PC-9 (cell line): ENCODE measurements at regions of chr21 and their contacts with region 1.

Region 1: GRCh38 chr21:34888569-34889319 is 160.4 kb downstream of the RUNX1 start:
- DNase-seq: peak; percentile 78 to 91
- H3K4me3 ChIP-seq: peak overlapping the region; percentile 97
- H3K27ac ChIP-seq: peak overlapping the region; percentile 99
- H3K4me1 ChIP-seq: peaks cover 1% of the 10 kb centered on the region; the same call in 1 of the 2 replicates
- H3K27me3 ChIP-seq: no peaks in the 10 kb centered on the region
- CTCF ChIP-seq: no peak

Region 2: GRCh38 chr21:34592120-34592955 is 296.4 kb before region 1 on chr21:
- CTCF ChIA-PET with region 1: no interaction called
- POLR2A ChIA-PET with region 1: no interaction called
- intact Hi-C with region 1: no loop called
- DNase-seq: no peak
- H3K4me3 ChIP-seq: no peak overlapping the region
- H3K27ac ChIP-seq: no peak overlapping the region
- H3K4me1 ChIP-seq: peaks cover 21% of the 10 kb centered on the region
- H3K27me3 ChIP-seq: no peaks in the 10 kb centered on the region
- CTCF ChIP-seq: no peak

Region 3: DNA sequence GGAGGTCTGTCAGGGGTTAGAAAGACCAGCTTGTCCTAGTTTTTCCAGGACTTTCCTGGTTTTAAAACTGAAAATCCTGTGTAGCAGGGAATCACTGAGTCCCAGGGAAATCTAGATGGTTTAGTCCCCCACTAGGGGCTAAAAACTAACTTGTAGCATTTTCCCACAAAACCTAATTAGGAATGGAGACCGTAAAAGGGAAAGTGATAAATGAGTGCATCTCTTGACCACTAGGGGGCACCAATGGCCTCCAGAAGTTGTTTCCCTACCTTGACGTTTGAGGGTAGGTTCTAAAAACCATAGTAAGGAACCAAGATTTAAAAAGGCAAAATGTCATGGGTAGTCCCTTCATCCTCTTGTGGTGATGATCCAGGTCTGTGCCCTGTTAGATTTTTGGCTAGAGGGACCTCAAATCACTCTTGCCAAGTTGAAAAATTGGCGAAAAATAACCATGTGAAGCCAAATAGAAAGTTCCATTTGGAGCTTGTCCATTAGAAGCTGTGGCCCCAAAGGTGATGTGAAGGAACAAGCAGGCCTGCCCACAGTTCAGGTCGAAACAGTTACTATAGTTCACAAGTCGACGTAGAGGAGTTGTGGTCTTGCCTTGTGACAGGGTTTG is 195.4 kb before region 1 on chr21:
- CTCF ChIA-PET with region 1: no interaction called
- POLR2A ChIA-PET with region 1: no interaction called
- intact Hi-C with region 1: loop called (anchors 2 kb)
- DNase-seq: peak; percentile 39
- H3K4me3 ChIP-seq: no peak overlapping the region
- H3K27ac ChIP-seq: 0 out of 2 replicates have a peak overlapping the region, but pooled peaks have one; percentile 89
- H3K4me1 ChIP-seq: peaks cover 38% of the 10 kb centered on the region
- H3K27me3 ChIP-seq: no peaks in the 10 kb centered on the region
- CTCF ChIP-seq: peak; percentile 86

Region 4: GRCh38 chr21:34826836-34827235 is 61.9 kb before region 1 on chr21:
- CTCF ChIA-PET with region 1: no interaction called
- POLR2A ChIA-PET with region 1: no interaction called
- intact Hi-C with region 1: no loop called
- DNase-seq: no peak
- H3K4me3 ChIP-seq: no peak overlapping the region
- H3K27ac ChIP-seq: no peak overlapping the region
- H3K4me1 ChIP-seq: no peaks in the 10 kb centered on the region
- H3K27me3 ChIP-seq: no peaks in the 10 kb centered on the region
- CTCF ChIP-seq: no peak

Region 5: DNA sequence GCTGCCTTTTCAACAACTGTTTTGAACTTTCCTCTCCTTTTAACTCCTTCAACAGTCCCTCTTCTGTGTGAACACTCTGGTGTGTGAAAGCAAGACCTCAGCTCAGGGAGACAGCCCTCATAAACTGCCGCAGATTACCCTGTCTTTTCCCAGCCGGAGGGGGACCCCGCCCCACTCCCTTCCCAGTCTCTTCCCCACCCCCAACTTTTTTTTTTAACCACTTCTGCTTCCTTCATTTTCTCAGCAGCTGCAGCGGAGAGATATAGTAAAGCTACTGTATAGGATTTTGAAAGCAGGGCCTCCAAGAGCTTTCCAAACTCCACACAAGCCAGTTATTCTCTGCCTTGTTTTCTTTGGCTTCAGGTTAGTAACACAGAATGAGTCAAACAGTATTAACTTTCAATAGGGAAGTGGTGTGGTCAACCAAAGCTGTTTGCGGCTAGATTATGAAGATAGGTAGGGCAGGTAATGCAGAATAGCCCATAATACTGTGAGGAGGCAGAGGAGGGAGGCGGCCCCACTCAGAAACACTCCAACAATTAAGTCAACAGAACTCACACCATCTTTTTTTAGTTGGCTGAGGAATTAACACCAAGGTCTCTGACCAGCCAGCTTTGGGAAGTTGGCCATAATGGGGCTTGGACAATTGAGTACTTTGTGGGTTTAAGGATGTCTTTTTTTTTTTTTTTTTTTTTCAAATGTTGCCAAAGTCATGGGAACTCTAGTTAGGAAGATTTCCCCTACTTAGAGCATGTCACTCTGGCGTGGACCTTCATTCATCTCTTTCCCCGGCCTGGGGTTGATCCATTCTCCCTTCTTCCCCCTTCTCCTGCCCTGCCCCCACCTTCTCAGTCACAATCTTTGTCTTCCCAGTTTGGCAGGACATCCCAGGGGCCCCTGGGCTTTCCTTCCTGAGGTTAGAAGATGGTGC is 43.0 kb before region 1 on chr21:
- CTCF ChIA-PET with region 1: no interaction called
- POLR2A ChIA-PET with region 1: interaction called, 36 read pairs
- intact Hi-C with region 1: no loop called
- DNase-seq: peak; percentile 72 to 94
- H3K4me3 ChIP-seq: peak overlapping the region; percentile 19; the same call in 1 of the 2 replicates
- H3K27ac ChIP-seq: peak overlapping the region; percentile 89
- H3K4me1 ChIP-seq: peaks cover 68% of the 10 kb centered on the region
- H3K27me3 ChIP-seq: no peaks in the 10 kb centered on the region
- CTCF ChIP-seq: no peak

Region 6: GRCh38 chr21:35051287-35051818 is 162.6 kb after region 1 on chr21:
- CTCF ChIA-PET with region 1: no interaction called
- POLR2A ChIA-PET with region 1: interaction called, 7 read pairs
- intact Hi-C with region 1: loop called (anchors 2 kb)
- DNase-seq: peak; percentile 86 to 95
- H3K4me3 ChIP-seq: peak overlapping the region; percentile 17; the same call in 1 of the 2 replicates
- H3K27ac ChIP-seq: peak overlapping the region; percentile 99
- H3K4me1 ChIP-seq: peaks cover 40% of the 10 kb centered on the region
- H3K27me3 ChIP-seq: no peaks in the 10 kb centered on the region
- CTCF ChIP-seq: peak; percentile 71

Region 7: DNA sequence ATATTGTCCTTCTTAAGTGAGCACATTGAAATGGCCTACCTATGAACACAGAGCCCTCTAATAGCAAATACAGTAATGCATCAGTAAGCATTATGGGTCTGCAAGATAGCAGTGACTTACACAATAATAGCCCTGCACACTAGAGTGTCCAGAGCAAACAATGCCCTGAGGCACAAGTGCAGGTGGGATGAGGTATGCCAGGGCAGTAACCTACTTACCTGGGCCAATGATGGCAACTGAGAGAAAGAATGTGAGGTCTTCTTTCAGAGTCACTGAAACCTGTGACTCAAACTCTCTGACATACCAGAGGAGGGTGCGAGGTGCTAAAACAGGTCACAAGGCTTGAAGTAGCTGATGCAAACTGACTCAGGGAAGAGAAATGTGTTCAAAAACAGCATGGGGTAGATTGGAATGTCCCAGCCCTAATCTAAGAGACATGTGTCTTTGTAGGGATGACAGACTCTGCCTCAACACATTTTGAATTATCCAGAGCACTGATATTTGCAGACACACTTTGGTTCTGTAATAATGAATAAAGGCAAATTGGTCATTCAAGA is 328.8 kb after region 1 on chr21:
- CTCF ChIA-PET with region 1: no interaction called
- POLR2A ChIA-PET with region 1: no interaction called
- intact Hi-C with region 1: loop called (anchors 1 kb)
- DNase-seq: peak; percentile 88 to 100
- H3K4me3 ChIP-seq: no peak overlapping the region
- H3K27ac ChIP-seq: peak overlapping the region; percentile 100
- H3K4me1 ChIP-seq: peaks cover 55% of the 10 kb centered on the region
- H3K27me3 ChIP-seq: no peaks in the 10 kb centered on the region
- CTCF ChIP-seq: no peak

Region 8: GRCh38 chr21:35840197-35840799 is 951.6 kb after region 1 on chr21:
- CTCF ChIA-PET with region 1: no interaction called
- POLR2A ChIA-PET with region 1: no interaction called
- intact Hi-C with region 1: loop called (anchors 5 kb)
- DNase-seq: peak; percentile 32 to 39
- H3K4me3 ChIP-seq: no peak overlapping the region
- H3K27ac ChIP-seq: no peak overlapping the region
- H3K4me1 ChIP-seq: no peaks in the 10 kb centered on the region
- H3K27me3 ChIP-seq: no peaks in the 10 kb centered on the region
- CTCF ChIP-seq: peak; percentile 83